ENCODE measurements at regions of chr7 and their contacts with region 1.

Region 1: GRCh38 chr7:39465055-39465929 is 100.9 kb upstream of the YAE1 start:
- DNase-seq: peak; percentile 56
- ATAC-seq: peak; percentile 93
- H3K4me3 ChIP-seq: peak overlapping the region; percentile 9 to 40; a peak in 3 of 4 replicates
- H3K27ac ChIP-seq: no peak overlapping the region
- H3K4me1 ChIP-seq: peaks cover 0 to 6% of the 10 kb centered on the region in 2 experiments; a peak in 2 of 4 replicates
- H3K27me3 ChIP-seq: no peaks in the 10 kb centered on the region
- CTCF ChIP-seq: peak; percentile 71 to 82 (median 82)
- POLR2A ChIP-seq: no peak
- RAD21 ChIP-seq: peak; percentile 77

Region 2: DNA sequence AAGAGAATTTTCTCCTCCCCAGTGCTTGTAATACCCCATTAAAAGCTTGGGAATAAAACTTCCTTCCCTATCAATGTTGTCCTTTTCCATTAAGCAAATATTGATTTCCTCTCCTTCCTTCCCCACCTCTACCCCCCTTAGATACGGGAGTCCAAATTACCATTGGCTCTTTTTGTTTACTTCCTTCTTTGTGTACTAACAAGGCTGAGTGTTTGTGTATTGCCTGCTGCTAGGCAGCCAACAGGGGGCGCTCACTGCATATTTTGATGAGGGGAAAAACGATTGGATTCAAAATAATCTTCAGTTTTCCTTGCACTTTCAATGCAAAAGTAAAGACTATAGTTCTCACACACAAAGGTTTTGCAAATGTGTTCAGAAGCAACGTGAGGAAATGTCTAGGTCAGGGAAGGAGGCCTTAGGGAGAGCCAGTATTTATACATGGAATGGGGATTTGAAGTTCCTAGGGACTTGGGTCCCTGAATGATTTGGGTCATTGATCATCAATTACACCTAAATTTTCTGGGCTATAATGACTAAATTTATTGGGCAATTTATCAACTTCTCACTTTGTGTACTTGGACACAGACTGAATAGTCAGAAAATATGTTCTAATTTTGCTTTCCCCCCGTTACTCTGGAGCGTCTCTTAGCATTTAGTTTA is 532.7 kb before region 1 on chr7:
- CTCF ChIA-PET with region 1: no interaction called
- POLR2A ChIA-PET with region 1: no interaction called
- RAD21 ChIA-PET with region 1: no interaction called
- intact Hi-C with region 1: loop called (anchors 2 kb)
- DNase-seq: peak; percentile 55
- ATAC-seq: peak; percentile 93
- H3K4me3 ChIP-seq: no peak overlapping the region
- H3K27ac ChIP-seq: no peak overlapping the region
- H3K4me1 ChIP-seq: 0 out of 4 replicates have a peak, but pooled peaks cover 0 to 3% of the 10 kb centered on the region in 2 experiments
- H3K27me3 ChIP-seq: no peaks in the 10 kb centered on the region
- CTCF ChIP-seq: peak; percentile 65 to 99 (median 95); a peak in 5 of 6 replicates
- POLR2A ChIP-seq: no peak
- RAD21 ChIP-seq: peak; percentile 79

Region 3: GRCh38 chr7:39453743-39454355 is 11.4 kb before region 1 on chr7:
- CTCF ChIA-PET with region 1: interaction called, 27 read pairs
- POLR2A ChIA-PET with region 1: no interaction called
- RAD21 ChIA-PET with region 1: no interaction called
- intact Hi-C with region 1: no loop called
- DNase-seq: peak; percentile 48
- ATAC-seq: peak; percentile 95
- H3K4me3 ChIP-seq: no peak overlapping the region
- H3K27ac ChIP-seq: no peak overlapping the region
- H3K4me1 ChIP-seq: no peaks in the 10 kb centered on the region
- H3K27me3 ChIP-seq: peaks cover 7% of the 10 kb centered on the region
- CTCF ChIP-seq: peak; percentile 43 to 97 (median 96)
- POLR2A ChIP-seq: no peak
- RAD21 ChIP-seq: peak; percentile 52

Region 4: GRCh38 chr7:39566023-39566921 is 101.0 kb after region 1 on chr7 and contains the start of gene YAE1:
- CTCF ChIA-PET with region 1: no interaction called
- POLR2A ChIA-PET with region 1: no interaction called
- RAD21 ChIA-PET with region 1: no interaction called
- intact Hi-C with region 1: no loop called
- DNase-seq: peak; percentile 57
- ATAC-seq: peak; percentile 93
- H3K4me3 ChIP-seq: peak within 1 kb of the TSS; percentile 85 to 96
- H3K27ac ChIP-seq: peak within 1 kb of the TSS; percentile 71
- H3K4me1 ChIP-seq: peaks cover 5 to 11% of the 10 kb centered on the region in 2 experiments; a peak in 3 of 4 replicates
- H3K27me3 ChIP-seq: no peaks in the 10 kb centered on the region
- CTCF ChIP-seq: no peak
- POLR2A ChIP-seq: peak; percentile 87
- RAD21 ChIP-seq: no peak
- total RNA-seq, gene YAE1: 16.9 TPM